ENCODE measurements at regions of chr7 and their contacts with region 1.

Region 1: GRCh38 chr7:120725376-120726039 is 132.4 kb downstream of the TSPAN12 start:
- DNase-seq: peak; percentile 22
- H3K4me3 ChIP-seq: no peak overlapping the region; a peak in 1 of 4 replicates
- H3K27ac ChIP-seq: no peak overlapping the region
- H3K4me1 ChIP-seq: no peaks in the 10 kb centered on the region
- H3K27me3 ChIP-seq: no peaks in the 10 kb centered on the region; the same call in 1 of the 2 replicates
- CTCF ChIP-seq: peak; percentile 96
- EP300 ChIP-seq: no peak
- RAD21 ChIP-seq: peak; percentile 69

Region 2: DNA sequence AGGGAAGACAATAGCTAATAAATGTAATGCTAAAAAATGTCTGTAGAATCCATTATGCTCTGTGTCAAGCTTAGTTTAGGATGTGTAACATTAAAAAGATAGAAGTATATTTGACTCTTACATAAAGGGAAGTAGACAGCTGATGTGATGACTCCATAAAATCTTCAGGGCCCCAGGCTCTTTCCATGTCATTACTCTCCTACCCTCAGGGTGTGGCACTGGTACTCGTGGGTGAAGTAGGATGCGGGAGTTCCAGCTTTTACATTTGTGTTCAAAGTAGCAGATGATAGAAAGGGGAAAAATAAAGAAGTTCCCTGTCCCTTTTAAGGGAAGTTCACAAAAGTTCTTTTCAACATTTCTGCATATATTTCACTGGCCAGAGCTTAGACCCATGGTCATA is 24.7 kb before region 1 on chr7:
- CTCF ChIA-PET with region 1: interaction called, 23 read pairs
- POLR2A ChIA-PET with region 1: no interaction called
- DNase-seq: no peak
- H3K4me3 ChIP-seq: no peak overlapping the region
- H3K27ac ChIP-seq: no peak overlapping the region
- H3K4me1 ChIP-seq: no peaks in the 10 kb centered on the region
- H3K27me3 ChIP-seq: no peaks in the 10 kb centered on the region
- CTCF ChIP-seq: no peak
- EP300 ChIP-seq: no peak
- RAD21 ChIP-seq: no peak

Region 3: DNA sequence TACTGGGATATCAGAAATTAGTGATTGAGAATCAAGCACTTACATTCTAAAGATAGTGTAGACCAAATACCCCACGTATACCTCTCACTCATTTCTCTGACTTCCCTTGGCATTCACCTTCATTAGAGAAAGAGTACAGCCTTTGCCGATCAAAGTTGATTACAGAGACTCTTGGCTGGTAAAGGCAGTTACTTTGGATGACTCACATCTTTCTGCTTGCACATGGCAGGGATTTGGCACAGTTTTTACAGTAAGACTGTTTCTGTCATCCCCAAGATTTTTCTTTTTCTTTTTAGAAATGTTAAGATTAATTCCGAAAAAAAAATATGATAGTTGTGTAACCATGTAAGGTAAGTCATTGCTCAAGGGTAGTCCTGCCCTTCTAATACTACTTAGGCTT is 10.6 kb before region 1 on chr7:
- CTCF ChIA-PET with region 1: interaction called, 50 read pairs
- POLR2A ChIA-PET with region 1: no interaction called
- DNase-seq: no peak
- H3K4me3 ChIP-seq: no peak overlapping the region
- H3K27ac ChIP-seq: no peak overlapping the region
- H3K4me1 ChIP-seq: no peaks in the 10 kb centered on the region
- H3K27me3 ChIP-seq: peaks cover under 1% of the 10 kb centered on the region; the same call in 1 of the 2 replicates
- CTCF ChIP-seq: no peak
- EP300 ChIP-seq: no peak
- RAD21 ChIP-seq: no peak

Region 4: DNA sequence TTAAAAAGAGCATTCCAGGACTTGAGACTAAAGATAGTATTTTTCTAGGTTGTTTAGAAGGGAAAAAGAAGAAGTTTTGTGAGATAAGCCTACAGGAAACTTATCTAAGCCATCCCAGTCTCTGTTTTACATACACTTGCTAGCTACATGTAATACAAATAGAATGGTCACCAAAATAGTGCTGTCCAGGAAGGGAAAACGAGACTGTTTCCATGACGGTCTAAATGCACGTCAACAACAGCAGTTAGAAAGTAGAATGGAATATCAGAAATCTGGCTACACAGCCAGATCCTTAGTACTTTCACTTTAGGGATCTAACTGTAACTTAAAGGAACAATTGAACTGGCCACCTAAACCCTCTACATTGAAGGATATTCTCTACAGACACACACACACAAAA is 14.8 kb after region 1 on chr7:
- CTCF ChIA-PET with region 1: interaction called, 19 read pairs
- POLR2A ChIA-PET with region 1: no interaction called
- DNase-seq: no peak
- H3K4me3 ChIP-seq: peak overlapping the region in 1 of 2 experiments; percentile 14; a peak in 1 of 4 replicates
- H3K27ac ChIP-seq: no peak overlapping the region
- H3K4me1 ChIP-seq: no peaks in the 10 kb centered on the region
- H3K27me3 ChIP-seq: no peaks in the 10 kb centered on the region; the same call in 1 of the 2 replicates
- CTCF ChIP-seq: no peak
- EP300 ChIP-seq: no peak
- RAD21 ChIP-seq: no peak

Region 5: DNA sequence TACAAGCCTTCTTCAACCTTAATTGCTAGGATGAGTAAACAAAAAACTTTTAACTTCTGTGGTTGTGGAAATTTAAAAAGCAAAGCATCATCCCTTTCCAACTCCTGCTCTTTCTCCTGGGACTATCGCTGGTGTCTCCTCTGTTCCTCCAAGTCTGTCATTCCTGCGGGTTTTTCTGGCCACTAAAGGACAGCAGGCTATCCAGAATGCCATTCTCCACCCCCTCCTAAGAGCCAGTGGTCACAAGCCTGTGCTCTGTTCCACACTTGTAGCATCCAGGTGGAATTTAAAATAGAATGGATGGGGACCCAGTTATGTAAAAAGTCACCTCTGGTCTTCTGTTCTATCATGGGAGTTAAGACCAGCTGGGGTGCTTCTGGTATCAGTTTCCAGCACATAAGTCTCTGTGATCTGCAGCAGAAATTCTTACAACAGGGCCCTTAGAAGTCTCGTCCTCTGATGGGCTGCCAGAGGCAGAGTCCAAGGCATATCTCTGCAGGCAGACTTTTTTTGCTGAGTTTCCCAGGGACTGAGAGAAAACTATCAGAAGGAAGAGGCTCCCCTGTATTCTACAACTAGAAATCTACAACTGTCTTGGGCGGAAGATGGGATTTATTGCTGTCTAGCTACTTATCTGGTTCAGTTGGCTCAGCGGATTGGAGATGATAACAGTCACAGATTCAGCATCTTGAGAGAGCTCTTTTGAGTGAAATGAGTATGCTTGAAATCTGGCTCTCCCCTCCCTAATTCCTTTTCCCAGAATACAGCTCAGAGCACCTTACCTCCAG is 598.2 kb after region 1 on chr7:
- CTCF ChIA-PET with region 1: no interaction called
- POLR2A ChIA-PET with region 1: no interaction called
- DNase-seq: no peak
- H3K4me3 ChIP-seq: no peak overlapping the region
- H3K27ac ChIP-seq: no peak overlapping the region
- H3K4me1 ChIP-seq: peaks cover 0 to 6% of the 10 kb centered on the region in 2 experiments; a peak in 1 of 4 replicates
- H3K27me3 ChIP-seq: peaks cover 13% of the 10 kb centered on the region
- CTCF ChIP-seq: no peak
- EP300 ChIP-seq: no peak
- RAD21 ChIP-seq: no peak